Transverse colon (tissue), 4 donors: ENCODE measurements at regions of chr11 and their contacts with region 1.

Region 1: DNA sequence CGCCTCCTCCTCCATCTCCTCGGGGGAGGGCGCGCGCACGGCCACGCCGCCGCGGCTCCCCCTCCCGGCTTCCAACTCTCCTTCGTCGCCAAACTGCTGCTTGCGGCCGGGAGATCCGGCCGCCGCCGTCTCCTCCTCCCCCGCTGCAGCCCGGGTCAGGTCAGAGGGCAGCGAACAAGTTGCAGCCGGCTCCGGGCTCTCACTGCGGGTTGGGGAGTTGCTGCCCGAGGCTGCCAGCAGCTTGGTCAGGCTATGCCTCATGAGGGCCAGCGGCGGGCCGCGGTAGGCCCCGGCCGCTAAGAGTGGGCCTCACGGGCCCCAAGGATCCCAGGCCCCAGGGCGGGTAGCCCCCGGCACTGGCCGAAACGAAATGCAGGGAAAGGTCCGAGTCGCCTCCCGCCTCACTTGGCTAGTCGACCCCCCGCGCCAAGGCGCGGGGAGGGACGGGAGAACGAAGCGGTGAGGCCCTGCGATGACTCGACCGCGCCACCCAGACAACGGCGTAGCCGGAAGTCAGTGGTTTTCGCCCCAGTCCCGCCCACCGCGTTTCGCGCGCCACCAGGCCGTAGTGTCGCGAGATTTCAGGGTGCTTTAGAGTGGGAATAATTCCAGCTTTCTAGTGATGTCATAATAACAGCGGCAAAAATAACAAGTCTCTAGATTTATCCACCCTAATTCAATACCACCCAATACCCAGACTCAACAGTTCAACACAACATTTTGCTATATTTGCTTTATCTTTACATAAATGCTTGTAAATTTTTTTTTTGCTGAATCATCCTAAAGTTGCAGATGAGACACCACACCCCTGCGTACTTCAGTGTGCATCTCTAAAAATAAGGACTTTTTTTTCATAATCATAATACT is at the start of gene CREBZF:
- DNase-seq: peak; percentile 96
- H3K4me3 ChIP-seq: peak within 1 kb of the TSS; percentile 61 to 93 (median 88)
- H3K27ac ChIP-seq: peak within 1 kb of the TSS; percentile 94 to 100 (median 98)
- H3K4me1 ChIP-seq: peaks cover 13 to 44% (median 33%) of the 10 kb centered on the region in 4 donors
- H3K27me3 ChIP-seq: no peaks in the 10 kb centered on the region
- CTCF ChIP-seq: no peak
- EP300 ChIP-seq: no peak
- POLR2A ChIP-seq: peak; percentile 99
- total RNA-seq, gene CREBZF: 55.3 to 147 (median 85.5) TPM

Region 2: DNA sequence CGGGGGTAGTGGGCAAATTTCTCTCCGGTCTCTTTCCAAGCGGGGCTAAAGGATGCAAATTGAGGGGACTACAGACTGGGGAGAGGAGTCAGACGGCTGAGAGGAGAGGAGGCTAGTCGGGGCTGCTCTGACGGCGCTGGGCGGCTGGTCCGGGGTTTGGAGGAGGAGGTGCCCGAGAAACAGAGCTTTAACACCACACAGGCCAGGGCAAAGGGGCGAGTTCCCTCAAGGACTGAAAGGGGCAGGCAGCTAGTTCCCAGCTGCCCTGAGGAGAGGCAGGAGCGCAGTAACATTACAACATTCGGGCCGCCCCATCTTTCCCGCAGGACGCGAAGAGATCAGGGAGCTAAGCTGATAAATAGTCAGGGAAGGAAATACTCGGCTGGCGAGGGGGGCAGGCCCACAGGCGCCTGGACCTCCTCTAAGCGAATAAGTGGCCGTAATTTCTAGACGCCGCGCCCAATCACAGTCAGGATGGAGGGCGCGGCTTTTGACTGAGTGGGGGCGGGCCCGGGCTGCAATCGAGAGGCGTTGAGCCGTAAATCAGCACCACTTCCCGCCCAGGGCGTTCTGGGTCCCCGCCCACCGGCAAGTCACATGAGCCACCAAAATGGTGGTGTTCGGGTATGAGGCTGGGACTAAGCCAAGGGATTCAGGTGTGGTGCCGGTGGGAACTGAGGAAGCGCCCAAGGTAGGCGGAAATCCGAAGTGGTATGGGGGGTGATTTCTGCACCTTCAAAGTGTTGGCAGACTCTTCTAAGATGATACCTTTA is 36.7 kb before region 1 on chr11 and contains the start of gene TMEM126B:
- in situ Hi-C with region 1: no loop called
- intact Hi-C with region 1: loop called (anchors 5 kb)
- DNase-seq: peak; percentile 98
- H3K4me3 ChIP-seq: peak within 1 kb of the TSS; percentile 51 to 87 (median 55)
- H3K27ac ChIP-seq: peak within 1 kb of the TSS; percentile 91 to 96 (median 94)
- H3K4me1 ChIP-seq: peaks cover 8 to 29% (median 10%) of the 10 kb centered on the region in 4 donors
- H3K27me3 ChIP-seq: no peaks in the 10 kb centered on the region
- CTCF ChIP-seq: no peak
- EP300 ChIP-seq: peak; percentile 68
- POLR2A ChIP-seq: peak; percentile 88
- total RNA-seq, gene TMEM126B: 29.9 to 48.3 (median 42.6) TPM

Region 3: GRCh38 chr11:86244522-86245368 is 579.9 kb after region 1 on chr11 and contains the start of gene EED:
- in situ Hi-C with region 1: loop called in 1 of 4 experiments (anchors 25 kb)
- intact Hi-C with region 1: no loop called
- DNase-seq: peak; percentile 96
- H3K4me3 ChIP-seq: peak within 1 kb of the TSS; percentile 83 to 93 (median 90)
- H3K27ac ChIP-seq: peak within 1 kb of the TSS; percentile 98 to 99 (median 98)
- H3K4me1 ChIP-seq: peaks cover 5 to 41% (median 30%) of the 10 kb centered on the region in 4 donors
- H3K27me3 ChIP-seq: no peaks in the 10 kb centered on the region
- CTCF ChIP-seq: peak in 1 of 5 experiments; percentile 21
- EP300 ChIP-seq: no peak
- POLR2A ChIP-seq: peak; percentile 79
- total RNA-seq, gene EED: 2.8 to 43.5 (median 23.5) TPM